ENCODE measurements at regions of chr3 and their contacts with region 1.

Region 1: DNA sequence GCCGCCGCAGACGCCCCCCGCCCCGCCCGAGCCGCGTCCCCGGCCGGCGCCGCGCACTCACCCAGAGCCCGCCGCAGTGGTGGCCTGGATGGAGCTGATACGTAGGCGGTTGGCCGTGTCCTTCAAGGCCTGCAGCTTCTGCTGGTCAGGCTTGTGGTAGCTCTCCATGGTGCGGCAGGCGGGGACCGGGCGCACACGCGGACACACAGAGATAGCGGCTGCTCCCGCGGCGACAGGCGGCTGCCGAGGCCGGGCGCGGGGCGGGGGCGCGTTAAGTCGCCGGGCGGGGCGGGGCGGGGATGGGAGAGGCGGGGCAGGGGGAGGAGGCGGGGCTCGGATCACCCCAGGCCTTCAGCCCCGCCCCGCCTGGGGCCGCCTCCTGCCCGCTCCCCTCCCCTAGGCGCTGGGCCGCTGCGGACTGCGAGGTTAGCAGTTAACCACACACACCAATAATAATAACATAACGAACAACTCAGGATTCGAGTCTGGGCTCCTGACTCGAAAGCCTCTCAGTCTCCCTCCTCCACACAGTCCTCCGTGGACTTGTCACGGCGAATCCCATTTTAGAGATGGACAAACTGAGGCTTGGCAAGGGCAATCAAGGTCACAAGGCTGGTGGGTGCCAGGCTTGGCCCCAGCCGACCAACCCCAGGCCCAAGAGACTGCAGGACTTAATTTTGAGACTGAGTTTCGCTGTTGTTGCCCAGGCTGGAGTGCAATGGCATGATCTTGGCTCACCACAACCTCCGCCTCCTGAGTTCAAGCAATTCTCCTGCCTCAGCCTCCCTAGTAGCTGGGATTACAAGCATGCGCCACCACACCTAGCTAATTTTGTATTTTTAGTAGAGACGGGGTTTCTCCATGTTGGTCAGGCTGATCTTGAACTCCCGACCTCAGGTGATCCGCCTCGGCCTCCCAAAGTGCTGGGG is at the start of gene TKT:
- DNase-seq: peak; percentile 56 to 89 (median 70)
- ATAC-seq: peak; percentile 75 to 77
- H3K4me3 Mint-ChIP-seq: peak within 1 kb of the TSS; percentile 88 to 95 (median 92)
- H3K27ac Mint-ChIP-seq: peak within 1 kb of the TSS; percentile 51 to 92 (median 86)
- H3K4me1 Mint-ChIP-seq: peaks cover 16 to 43% (median 39%) of the 10 kb centered on the region in 4 donors
- H3K27me3 Mint-ChIP-seq: no peaks in the 10 kb centered on the region
- polyA plus RNA-seq, gene TKT: 51.1 to 73.1 (median 69.7) TPM

Region 2: DNA sequence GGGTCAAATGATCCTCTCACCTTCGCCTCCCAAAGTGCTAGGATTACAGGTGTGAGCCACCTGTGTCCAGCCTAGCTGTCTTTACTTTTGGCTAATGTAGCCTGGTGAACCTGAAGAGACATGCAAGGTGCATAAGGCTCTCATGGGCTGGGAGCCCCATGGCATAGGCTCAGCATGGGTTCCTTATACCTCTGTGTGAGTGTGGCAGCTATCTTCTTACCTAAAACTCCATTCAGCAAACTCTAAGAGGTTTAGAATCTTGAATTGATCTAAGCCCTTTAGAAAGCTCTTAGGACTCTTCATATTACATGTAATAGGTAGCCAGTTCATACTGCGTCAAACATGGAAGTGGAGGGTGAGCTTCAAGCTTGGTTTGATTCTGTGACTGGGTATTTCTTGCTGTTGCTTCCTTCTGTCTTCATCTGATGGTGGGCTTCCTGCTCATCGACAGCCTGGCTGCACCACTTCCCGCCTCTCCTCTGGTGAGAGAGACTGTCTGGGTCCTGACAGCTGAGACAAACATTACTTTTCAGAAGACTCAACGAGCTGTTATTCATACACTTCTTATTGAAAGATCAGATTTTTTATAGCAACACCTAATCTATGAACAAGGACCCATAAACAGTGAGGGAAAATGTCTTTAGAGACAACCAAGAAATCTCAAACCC is 19.0 kb after region 1 on chr3:
- POLR2A ChIA-PET with region 1: interaction called, 18 read pairs
- DNase-seq: peak in 7 of 10 donors; percentile 31 to 73 (median 52)
- ATAC-seq: peak; percentile 93 to 98
- H3K4me3 Mint-ChIP-seq: peak overlapping the region; percentile 20 to 75 (median 62)
- H3K27ac Mint-ChIP-seq: peak overlapping the region; percentile 79 to 98 (median 93)
- H3K4me1 Mint-ChIP-seq: peaks cover 7 to 12% (median 9%) of the 10 kb centered on the region in 4 donors
- H3K27me3 Mint-ChIP-seq: peaks cover 0 to 1% (median 0%) of the 10 kb centered on the region in 5 donors

Measured in naive thymus-derived CD8-positive, alpha-beta T cell (primary cell).